ENCODE measurements at regions of chr22 and their contacts with region 1.

Region 1: GRCh38 chr22:20810645-20811044 is 36.7 kb downstream of the SERPIND1 start:
- DNase-seq: no peak
- CTCF ChIP-seq: no peak

Region 2: GRCh38 chr22:20495861-20496681 is 314.6 kb before region 1 on chr22:
- in situ Hi-C with region 1: no loop called
- DNase-seq: peak; percentile 99
- CTCF ChIP-seq: peak; percentile 89

Region 3: DNA sequence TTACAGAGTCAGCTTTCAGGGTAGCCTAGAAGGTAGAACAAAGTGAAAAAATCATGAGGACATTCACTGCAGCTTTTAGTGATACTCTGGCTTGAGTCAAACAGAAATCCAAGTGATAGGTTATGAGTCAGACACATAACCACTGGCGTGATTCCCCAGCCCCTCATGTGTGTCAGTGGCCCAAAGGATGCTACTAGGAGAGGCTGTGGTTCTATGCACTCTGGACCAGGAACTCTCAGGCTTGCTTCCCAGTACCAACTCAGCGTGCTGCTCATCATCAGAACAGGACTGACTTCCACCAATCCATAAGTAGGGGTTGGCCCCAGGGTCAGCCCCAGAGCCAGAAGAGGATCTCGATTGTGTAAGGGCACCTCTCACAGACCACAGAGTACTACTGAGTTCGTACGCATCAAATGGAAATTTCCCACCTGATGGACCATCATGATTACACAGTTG is 186.5 kb before region 1 on chr22:
- in situ Hi-C with region 1: no loop called
- DNase-seq: peak; percentile 68
- CTCF ChIP-seq: no peak

Region 4: DNA sequence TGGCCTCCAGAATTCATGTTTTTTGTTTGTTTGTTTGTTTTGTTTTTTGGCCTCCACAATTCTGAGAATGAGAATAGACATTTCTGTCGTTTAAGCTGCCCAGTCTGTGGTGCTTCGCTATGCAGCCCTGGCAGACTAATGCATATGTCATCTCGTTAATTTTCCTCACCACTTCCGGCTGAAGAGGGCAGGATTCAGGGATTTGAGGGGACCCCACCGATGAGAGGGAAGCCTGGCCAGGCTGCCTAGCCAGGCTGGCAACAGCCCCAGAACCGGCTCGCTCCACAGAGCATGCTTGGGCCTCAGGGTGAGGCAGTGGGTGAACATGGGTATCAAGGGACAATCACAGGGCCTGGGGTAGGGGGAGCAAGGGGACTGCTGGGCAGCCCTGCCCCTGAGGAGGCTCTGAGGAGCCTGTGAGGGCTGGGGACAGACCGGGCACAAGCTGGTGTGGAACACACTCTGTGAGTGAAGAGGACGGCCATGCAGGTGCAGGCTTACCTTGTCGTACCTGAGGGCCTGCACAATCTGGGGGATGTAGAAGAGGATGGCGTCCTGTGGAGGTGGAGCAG is 84.6 kb before region 1 on chr22:
- in situ Hi-C with region 1: no loop called
- DNase-seq: no peak
- CTCF ChIP-seq: no peak

Region 5: DNA sequence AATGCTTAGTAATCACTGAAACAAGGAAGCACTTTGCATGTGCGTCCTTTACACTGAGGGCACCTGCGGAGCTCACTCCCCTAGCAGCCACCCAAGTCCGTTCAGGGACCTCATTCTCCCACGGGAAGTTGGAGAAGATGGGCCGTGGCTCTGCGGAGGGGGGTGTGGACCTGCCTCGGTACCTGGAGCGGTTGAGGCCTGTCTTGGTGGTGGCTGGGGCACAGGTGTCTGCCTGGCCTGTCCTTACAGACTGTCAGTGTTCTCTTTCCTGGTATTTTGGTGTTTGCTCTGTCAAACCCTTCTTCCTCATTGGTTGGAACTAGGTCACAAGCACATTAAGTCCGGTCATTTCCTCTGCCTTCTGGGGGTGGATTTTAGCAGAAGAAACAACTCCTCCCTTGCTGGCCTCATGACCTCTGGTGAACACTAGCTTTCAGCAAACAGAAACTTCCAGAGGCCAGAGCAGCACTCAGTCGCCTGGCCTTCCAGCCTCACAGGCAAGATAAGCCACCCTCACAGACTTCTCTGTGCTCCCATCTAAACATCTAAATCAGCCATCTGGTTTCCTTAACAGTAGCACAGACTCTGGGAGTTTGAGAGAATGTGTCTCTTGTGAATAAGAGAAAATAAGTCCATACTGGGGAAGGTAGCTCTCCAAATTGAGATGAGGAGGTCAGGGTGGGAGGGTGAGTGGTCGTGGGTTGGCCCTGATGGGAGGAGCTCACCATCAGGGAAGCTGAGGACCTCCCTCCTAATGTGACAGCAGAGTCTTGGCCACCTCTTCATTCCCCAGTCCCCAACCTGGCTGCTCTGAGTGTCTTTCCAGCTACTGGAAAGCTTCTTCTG is 56.8 kb after region 1 on chr22:
- in situ Hi-C with region 1: loop called (anchors 10 kb)
- DNase-seq: no peak
- CTCF ChIP-seq: no peak

Measured in GM13976 (cell line).